T-cell (primary cell): ENCODE measurements at regions of chr2 and their contacts with region 1.

Region 1: DNA sequence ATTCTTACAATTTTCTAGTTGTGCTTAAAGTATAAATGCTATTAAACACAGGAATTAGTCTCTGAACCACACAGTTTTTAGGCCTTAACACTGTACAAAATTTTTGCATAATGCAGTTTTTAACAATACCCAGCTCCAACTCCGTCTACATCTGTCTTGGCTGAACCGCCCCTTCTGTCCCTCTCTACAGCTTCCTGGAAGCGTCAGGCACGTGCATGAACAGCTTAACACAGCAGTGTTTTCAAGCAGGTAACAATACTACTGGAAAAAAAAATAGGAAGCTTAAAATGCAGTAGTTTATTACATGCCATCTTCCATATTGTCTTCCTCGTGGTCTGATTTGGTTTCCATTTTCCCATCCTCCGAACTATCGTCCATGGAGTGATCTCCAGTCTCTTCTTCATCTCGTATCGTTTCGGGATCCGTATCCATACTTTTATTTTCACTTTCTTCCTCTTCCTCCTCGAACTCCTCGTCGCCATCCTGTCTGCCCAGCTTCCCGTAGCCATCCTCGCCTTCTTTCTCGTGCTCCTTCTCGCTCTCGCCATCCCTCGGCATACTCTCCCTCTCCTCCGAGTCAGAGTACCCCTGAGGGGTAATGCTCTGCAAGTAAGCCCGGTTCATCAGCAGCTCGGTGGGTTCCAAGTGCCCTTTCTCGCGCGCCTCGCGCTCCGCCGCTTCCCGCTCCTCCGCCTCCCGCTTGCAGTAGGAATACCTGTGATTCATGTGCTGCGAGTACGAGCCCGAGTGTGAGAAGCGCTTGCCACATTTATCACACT is 130.6 kb downstream of the ZEB2 start:
- DNase-seq: no peak
- ATAC-seq: no peak
- H3K4me3 ChIP-seq: no peak overlapping the region
- H3K4me3 Mint-ChIP-seq: no peak overlapping the region
- H3K27ac ChIP-seq: no peak overlapping the region
- H3K27ac Mint-ChIP-seq: no peak overlapping the region
- H3K4me1 ChIP-seq: no peaks in the 10 kb centered on the region
- H3K4me1 Mint-ChIP-seq: no peaks in the 10 kb centered on the region
- H3K27me3 ChIP-seq: no peaks in the 10 kb centered on the region
- H3K27me3 Mint-ChIP-seq: no peaks in the 10 kb centered on the region

Region 2: GRCh38 chr2:144128130-144128746 is 261.1 kb before region 1 on chr2:
- CTCF ChIA-PET with region 1: no interaction called
- POLR2A ChIA-PET with region 1: interaction called in 1 of 2 experiments, 12 read pairs
- DNase-seq: no peak
- ATAC-seq: no peak
- H3K4me3 ChIP-seq: no peak overlapping the region
- H3K4me3 Mint-ChIP-seq: no peak overlapping the region
- H3K27ac ChIP-seq: no peak overlapping the region
- H3K27ac Mint-ChIP-seq: no peak overlapping the region
- H3K4me1 ChIP-seq: no peaks in the 10 kb centered on the region
- H3K4me1 Mint-ChIP-seq: no peaks in the 10 kb centered on the region
- H3K27me3 ChIP-seq: no peaks in the 10 kb centered on the region
- H3K27me3 Mint-ChIP-seq: no peaks in the 10 kb centered on the region